ENCODE measurements at regions of chr6 and their contacts with region 1.

Region 1: GRCh38 chr6:617445-618100 is 39.3 kb downstream of the HUS1B start:
- DNase-seq: peak in 1 of 2 experiments; percentile 34
- H3K4me3 ChIP-seq: no peak overlapping the region
- H3K4me3 Mint-ChIP-seq: no peak overlapping the region
- H3K27ac Mint-ChIP-seq: no peak overlapping the region
- H3K4me1 ChIP-seq: peaks cover 5% of the 10 kb centered on the region; the same call in 1 of the 2 replicates
- H3K4me1 Mint-ChIP-seq: peaks cover 7% of the 10 kb centered on the region
- H3K27me3 ChIP-seq: no peaks in the 10 kb centered on the region
- H3K27me3 Mint-ChIP-seq: no peaks in the 10 kb centered on the region
- CTCF ChIP-seq: peak in 1 of 2 experiments; percentile 24

Region 2: GRCh38 chr6:628766-629165 is 11.2 kb after region 1 on chr6:
- CTCF ChIA-PET with region 1: no interaction called
- POLR2A ChIA-PET with region 1: no interaction called
- intact Hi-C with region 1: no loop called
- DNase-seq: no peak
- H3K4me3 ChIP-seq: no peak overlapping the region
- H3K4me3 Mint-ChIP-seq: no peak overlapping the region
- H3K27ac Mint-ChIP-seq: no peak overlapping the region
- H3K4me1 ChIP-seq: 0 out of 2 replicates have a peak, but pooled peaks cover 8% of the 10 kb centered on the region
- H3K4me1 Mint-ChIP-seq: peaks cover 6% of the 10 kb centered on the region
- H3K27me3 ChIP-seq: no peaks in the 10 kb centered on the region
- H3K27me3 Mint-ChIP-seq: no peaks in the 10 kb centered on the region
- CTCF ChIP-seq: no peak

Region 3: DNA sequence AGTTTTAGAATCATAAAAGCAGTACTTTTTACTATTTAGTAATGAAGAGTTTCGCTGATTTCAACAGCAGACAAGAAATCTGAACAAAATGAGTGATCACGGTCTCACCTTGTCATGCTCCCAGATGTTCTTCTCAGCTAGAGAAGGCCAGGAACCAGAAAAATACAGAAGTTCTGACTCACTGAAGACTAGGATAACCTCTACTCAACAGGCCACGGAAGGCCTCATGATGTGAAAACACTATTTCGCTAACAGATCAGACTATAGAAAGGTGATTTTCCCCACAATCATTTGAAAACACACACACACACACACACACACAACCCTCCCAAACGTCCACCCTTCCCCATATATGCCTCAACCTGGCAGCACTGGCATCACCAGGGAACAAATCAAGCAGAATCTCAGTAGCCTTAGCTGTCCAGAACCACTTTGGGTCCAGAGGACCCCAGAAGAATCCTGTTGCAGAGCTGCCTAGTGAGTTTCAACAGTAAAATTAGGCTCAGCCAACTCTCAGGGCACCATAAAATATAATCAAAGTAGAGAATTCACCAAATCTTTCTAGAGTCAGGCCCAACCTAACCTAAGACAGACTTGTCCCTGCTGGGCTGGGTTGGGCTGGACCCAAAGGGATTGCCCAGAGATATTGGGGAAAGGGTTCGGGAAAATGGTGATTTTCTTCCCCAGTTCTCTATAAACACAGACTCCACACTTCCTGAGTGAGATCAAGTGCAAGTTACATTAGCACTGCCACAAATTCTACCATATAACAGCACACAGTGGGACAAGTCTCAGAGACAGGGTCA is 67.5 kb after region 1 on chr6:
- CTCF ChIA-PET with region 1: no interaction called
- POLR2A ChIA-PET with region 1: no interaction called
- intact Hi-C with region 1: loop called (anchors 5 kb)
- DNase-seq: no peak
- H3K4me3 ChIP-seq: no peak overlapping the region
- H3K4me3 Mint-ChIP-seq: no peak overlapping the region
- H3K27ac Mint-ChIP-seq: no peak overlapping the region
- H3K4me1 ChIP-seq: no peaks in the 10 kb centered on the region
- H3K4me1 Mint-ChIP-seq: peaks cover 9% of the 10 kb centered on the region
- H3K27me3 ChIP-seq: no peaks in the 10 kb centered on the region
- H3K27me3 Mint-ChIP-seq: no peaks in the 10 kb centered on the region
- CTCF ChIP-seq: no peak